ENCODE measurements at regions of chr20 and their contacts with region 1.

Region 1: DNA sequence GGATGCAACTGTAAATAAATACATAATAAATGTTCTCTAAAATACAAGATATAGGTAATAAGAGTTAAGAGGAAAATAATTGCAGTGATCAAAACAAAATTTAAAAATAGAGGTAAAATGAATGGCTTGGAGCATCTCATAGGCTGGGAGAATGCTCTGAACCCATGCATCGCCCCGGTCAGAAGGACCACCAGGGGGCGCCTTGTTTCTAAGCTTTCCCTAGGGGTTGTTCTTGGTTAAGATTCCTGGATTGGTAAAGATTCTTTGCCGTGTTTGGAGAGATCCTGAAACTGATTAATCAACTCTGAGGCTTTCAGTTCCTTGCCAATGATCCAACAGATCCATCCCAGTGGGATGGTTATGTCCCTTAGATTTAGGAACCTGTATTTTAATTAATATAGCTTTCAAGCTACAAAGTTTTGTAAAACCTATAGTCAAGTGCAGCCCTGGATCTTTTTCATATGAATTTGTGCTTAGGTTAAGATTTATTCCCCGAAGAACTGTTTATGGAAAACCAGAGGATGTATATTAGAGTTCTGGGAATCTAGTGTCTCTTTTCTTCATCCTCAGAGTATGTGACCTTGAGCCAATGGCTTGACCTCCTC is 45.3 kb upstream of the PRELID3B start:
- DNase-seq: peak; percentile 47
- ATAC-seq: peak; percentile 73
- H3K4me3 ChIP-seq: no peak overlapping the region
- H3K27ac ChIP-seq: no peak overlapping the region
- H3K4me1 ChIP-seq: peaks cover 2% of the 10 kb centered on the region; the same call in 1 of the 2 replicates
- H3K27me3 ChIP-seq: peaks cover 10% of the 10 kb centered on the region
- CTCF ChIP-seq: peak; percentile 70
- POLR2A ChIP-seq: no peak
- RAD21 ChIP-seq: peak; percentile 56

Region 2: DNA sequence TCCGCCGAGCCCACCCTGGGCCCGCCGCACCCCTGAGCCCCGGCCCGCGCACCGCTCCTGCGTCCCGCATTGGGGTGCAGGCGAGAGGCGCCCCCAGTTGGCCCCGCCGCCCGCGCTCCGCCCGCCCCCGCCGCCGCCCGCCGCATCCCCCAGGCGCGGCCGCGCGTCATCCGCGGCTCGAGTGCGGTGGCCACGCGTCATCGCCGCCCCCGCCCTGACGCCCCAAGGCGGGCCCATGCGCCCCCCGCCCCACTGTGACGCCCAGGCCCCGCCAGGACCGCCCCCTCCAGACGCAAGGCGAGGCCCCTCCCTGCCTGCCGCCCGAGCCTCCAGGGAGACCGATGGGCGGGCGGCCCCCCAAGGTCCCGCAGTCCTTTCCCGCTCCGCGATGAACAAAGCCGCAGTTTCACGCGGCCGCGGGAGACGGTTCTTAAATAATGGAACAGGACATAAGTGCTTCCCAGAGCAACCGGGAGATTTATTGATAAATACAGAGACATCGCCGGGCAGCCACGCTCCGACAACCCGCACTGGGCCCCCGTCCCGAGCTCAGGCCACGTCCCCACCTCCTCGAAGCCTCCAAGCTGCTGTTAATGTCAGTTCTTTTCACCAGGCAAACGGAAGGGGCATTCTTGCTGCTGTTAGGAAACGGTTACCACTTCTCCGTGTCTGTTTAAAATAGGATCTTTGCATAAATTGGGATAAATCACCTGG is 859.3 kb before region 1 on chr20 and contains the start of gene ANKRD60:
- CTCF ChIA-PET with region 1: no interaction called
- POLR2A ChIA-PET with region 1: interaction called, 13 read pairs
- dilution Hi-C with region 1: no loop called
- in situ Hi-C with region 1: no loop called
- intact Hi-C with region 1: no loop called
- DNase-seq: peak; percentile 73
- ATAC-seq: peak; percentile 84
- H3K4me3 ChIP-seq: peak within 1 kb of the TSS; percentile 35
- H3K27ac ChIP-seq: 0 out of 2 replicates have a peak within 1 kb of the TSS, but pooled peaks have one; percentile 6
- H3K4me1 ChIP-seq: no peaks in the 10 kb centered on the region
- H3K27me3 ChIP-seq: peaks cover 25% of the 10 kb centered on the region
- CTCF ChIP-seq: no peak
- POLR2A ChIP-seq: peak; percentile 72
- RAD21 ChIP-seq: no peak
- total RNA-seq, gene ANKRD60: not detected in 2 replicates

Region 3: GRCh38 chr20:58778760-58779159 is 309.2 kb before region 1 on chr20:
- CTCF ChIA-PET with region 1: no interaction called
- POLR2A ChIA-PET with region 1: no interaction called
- dilution Hi-C with region 1: no loop called
- in situ Hi-C with region 1: no loop called
- intact Hi-C with region 1: no loop called
- DNase-seq: no peak
- ATAC-seq: no peak
- H3K4me3 ChIP-seq: no peak overlapping the region
- H3K27ac ChIP-seq: no peak overlapping the region
- H3K4me1 ChIP-seq: no peaks in the 10 kb centered on the region
- H3K27me3 ChIP-seq: peaks cover 57% of the 10 kb centered on the region
- CTCF ChIP-seq: no peak
- POLR2A ChIP-seq: no peak
- RAD21 ChIP-seq: no peak

Region 4: DNA sequence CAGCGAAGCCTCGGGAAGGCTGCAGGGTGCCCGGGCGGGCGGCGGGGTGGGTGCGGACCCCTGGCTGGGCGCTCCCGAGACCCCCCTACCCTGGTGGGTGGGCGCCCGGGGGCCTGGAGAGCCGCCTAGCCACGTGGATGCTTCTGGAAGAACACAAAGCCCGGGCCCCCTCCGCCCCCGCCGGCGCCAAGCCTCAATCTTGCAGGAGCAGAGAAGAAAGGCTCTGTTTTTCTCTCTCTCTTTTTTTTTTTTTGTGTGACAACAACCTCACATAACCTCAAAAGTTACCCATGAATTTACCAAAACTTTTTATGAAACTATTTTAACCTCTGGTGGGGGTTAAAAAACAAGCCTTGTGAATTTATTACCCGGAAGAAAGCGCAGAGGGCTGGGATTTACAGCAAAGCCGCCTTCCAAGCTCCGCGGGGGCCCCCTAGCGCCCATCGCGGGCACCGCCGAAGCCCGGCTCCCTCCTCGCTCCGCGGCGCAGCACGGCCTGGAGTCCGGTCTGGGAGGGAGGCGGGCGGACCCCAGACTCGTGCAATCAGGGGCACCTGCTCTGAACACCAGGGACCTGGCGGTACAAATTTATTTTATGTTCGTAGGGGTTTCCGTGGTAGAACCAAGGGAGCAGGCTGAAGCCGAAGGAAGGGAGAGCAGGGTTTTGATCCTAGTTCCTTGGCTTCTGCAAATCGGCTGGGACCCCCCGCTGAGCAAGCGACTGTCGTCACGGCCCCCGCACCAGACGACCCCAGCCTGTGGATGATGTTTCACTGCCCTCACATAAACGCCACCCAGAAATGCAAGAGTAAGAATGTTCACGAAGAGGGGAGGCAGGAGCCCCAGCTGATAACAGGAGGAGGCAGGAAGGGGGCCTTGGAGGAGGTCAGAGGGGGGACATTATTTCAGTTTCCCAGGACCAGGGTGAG is 134.6 kb after region 1 on chr20:
- CTCF ChIA-PET with region 1: no interaction called
- POLR2A ChIA-PET with region 1: no interaction called
- dilution Hi-C with region 1: no loop called
- in situ Hi-C with region 1: no loop called
- intact Hi-C with region 1: loop called (anchors 2 kb)
- DNase-seq: peak; percentile 66
- ATAC-seq: peak; percentile 99
- H3K4me3 ChIP-seq: peak overlapping the region; percentile 33
- H3K27ac ChIP-seq: no peak overlapping the region
- H3K4me1 ChIP-seq: no peaks in the 10 kb centered on the region
- H3K27me3 ChIP-seq: peaks cover 44% of the 10 kb centered on the region
- CTCF ChIP-seq: peak; percentile 94
- POLR2A ChIP-seq: no peak
- RAD21 ChIP-seq: peak; percentile 92

Region 5: DNA sequence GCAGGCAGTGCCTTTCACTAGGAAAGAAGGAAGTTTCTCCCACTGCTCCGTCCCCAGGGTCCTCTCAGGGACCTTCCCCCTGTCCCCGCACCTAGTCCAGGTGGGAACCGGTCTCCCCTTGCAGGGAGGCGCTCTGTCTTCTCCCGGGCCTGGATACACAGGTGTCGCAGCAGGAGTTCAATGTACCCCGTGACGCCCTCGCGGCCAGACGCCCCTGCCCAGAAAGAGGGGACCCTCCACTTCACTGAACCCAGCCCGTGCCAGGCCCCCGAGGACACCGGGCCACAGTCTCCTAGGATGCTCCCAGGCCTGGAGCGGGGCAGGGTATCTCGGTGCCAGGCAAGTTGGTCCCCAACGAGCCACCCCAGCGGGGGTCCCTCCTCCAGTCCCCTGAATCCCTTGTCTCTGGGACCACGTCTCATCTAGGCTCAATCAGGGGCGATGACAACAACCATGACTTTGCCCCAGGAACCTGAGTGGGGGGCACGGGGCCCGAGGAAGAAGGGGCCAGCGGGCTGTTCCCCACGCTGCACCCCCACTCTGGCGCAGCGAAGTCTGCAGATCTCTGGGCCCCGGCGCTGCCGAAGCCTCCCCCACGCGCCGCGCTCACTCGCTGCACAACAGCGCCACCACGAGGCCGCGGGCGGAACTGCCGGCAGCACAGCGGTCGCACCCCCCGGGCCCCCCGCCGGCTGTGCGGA is 315.5 kb after region 1 on chr20:
- CTCF ChIA-PET with region 1: no interaction called
- POLR2A ChIA-PET with region 1: no interaction called
- dilution Hi-C with region 1: no loop called
- in situ Hi-C with region 1: no loop called
- intact Hi-C with region 1: loop called (anchors 10 kb)
- DNase-seq: no peak
- ATAC-seq: peak; percentile 56; the same call in 1 of the 2 replicates
- H3K4me3 ChIP-seq: no peak overlapping the region
- H3K27ac ChIP-seq: no peak overlapping the region
- H3K4me1 ChIP-seq: no peaks in the 10 kb centered on the region
- H3K27me3 ChIP-seq: peaks cover 12% of the 10 kb centered on the region
- CTCF ChIP-seq: peak; percentile 65
- POLR2A ChIP-seq: no peak
- RAD21 ChIP-seq: peak; percentile 60

Region 6: DNA sequence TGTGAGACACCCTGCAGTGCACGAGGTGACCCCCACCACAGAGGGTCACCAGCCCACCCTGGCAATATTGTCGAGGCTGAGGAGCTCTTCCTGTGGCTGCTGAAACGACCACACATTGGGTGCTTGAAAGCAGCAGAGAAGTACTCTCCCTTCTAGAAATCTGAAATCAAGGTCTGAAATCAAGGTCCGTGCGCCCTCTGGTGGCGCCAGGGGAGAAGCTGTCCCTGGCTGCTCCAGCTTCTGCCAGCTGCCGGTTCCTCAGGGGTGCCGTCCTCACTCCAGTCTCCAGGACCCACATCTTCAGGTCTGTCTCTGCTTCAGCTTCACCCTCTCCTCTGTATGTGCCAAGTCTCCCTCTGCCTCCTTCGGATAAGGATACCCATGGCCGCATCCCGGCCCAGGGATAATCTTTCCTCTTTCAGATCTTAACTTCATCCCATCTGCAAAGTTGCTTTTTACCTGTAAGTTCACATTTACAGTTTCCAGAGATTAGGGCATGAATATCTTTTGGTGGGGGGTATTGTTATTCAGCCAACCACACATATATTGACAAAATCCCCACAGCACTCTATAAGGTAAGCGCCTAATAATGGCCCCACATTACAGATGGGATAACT is 408.1 kb after region 1 on chr20:
- CTCF ChIA-PET with region 1: no interaction called
- POLR2A ChIA-PET with region 1: no interaction called
- dilution Hi-C with region 1: no loop called
- in situ Hi-C with region 1: no loop called
- intact Hi-C with region 1: loop called (anchors 10 kb)
- DNase-seq: peak; percentile 53
- ATAC-seq: peak; percentile 89
- H3K4me3 ChIP-seq: no peak overlapping the region
- H3K27ac ChIP-seq: no peak overlapping the region
- H3K4me1 ChIP-seq: no peaks in the 10 kb centered on the region
- H3K27me3 ChIP-seq: no peaks in the 10 kb centered on the region
- CTCF ChIP-seq: peak; percentile 79
- POLR2A ChIP-seq: no peak
- RAD21 ChIP-seq: peak; percentile 63

Measured in IMR-90 (cell line).